ENCODE measurements at regions of chr1 and their contacts with region 1.

Region 1: DNA sequence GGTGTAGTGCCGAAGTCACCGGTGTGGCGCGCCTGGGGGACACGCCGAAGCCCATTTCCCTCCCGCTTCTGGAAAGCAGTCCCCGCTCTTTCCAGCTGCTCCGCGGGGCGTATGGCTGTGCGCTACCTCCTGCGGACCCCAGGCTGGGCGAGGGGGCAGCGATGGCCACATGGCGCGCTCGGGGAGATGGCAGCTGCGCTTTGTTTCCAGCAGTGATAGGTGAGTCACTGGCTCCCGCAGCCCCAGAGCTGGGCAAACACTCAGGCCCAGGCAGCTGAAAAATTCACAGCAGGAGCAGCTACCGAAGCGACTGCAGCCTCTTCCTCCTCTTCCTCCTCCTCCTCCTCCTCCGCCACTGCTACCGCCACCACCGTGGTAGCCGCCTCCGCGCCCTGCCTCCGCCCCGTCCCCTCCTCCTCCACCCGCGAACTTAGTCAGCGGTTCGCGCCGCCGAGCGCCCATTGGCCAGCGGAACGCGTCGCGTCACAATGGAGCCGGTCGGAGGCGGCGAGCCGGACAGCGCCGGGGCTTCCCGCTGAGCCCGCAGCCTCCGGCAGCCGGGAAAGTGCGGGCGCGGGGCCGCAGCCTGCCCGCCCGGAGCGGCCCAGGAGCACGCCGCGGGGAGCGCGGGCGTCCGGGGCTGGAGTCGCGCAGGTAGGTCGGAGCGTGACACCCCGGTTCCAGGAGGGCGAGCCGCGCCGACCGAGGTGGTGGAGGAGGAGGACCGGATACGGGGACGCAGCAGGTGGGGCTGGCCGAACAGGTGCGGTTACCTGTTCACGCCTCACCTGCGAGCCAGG is at the start of gene LRRC8B:
- DNase-seq: peak; percentile 85
- H3K4me3 ChIP-seq: peak within 1 kb of the TSS; percentile 87
- H3K27ac ChIP-seq: peak within 1 kb of the TSS; percentile 65
- H3K4me1 ChIP-seq: peaks cover 44% of the 10 kb centered on the region
- CTCF ChIP-seq: no peak
- total RNA-seq, gene LRRC8B: 3.2 and 4.4 TPM in 2 replicates

Region 2: DNA sequence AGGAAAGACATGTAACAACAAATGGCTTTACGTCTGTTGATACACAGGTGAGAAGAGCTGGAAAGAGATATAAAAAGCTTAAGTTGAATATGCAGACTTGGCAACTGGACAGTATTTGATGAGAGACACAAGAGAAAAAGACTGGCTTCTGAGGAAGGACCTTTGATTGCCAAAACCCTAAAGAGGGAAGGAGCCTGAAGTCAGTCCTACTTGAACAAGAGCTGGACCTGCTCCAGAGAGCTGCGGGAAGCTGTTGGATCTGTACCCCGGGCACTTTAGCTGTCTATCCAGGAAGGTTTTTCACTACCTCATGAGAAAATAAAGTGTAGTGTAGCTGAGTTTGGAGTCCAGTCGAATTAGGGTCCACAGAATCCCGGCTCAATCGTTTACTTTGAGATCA is 25.2 kb before region 1 on chr1:
- CTCF ChIA-PET with region 1: no interaction called
- POLR2A ChIA-PET with region 1: no interaction called
- intact Hi-C with region 1: no loop called
- DNase-seq: no peak
- H3K4me3 ChIP-seq: no peak overlapping the region
- H3K27ac ChIP-seq: no peak overlapping the region
- H3K4me1 ChIP-seq: no peaks in the 10 kb centered on the region
- CTCF ChIP-seq: no peak

Region 3: DNA sequence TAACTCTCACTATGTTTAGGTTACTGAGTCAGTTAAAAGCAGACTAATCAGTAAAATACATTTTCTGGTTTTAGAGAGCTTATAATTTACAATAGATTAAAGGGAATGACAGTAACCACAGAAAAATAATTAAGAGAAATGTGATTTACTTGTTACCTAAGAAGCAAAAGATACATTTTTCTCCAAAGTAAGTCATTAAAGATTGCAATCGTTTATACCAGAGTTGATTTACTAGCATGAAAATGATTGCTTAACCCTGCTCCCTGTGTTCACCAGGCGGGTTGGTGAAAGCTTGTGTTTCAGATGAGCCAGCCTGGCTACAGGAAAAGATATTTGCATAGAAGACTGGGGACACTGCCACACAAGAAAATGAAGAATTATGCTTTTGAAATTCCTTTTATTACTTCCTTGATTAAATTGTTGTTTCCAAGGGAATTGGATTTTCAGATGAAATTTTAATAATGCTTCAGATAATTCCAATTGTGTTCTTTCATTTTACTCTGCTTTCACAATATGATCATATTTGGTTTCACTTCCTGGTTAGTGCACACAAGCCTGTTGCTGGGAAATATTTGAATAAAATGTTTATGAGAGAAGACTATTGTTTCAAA is 28.0 kb after region 1 on chr1:
- CTCF ChIA-PET with region 1: no interaction called
- POLR2A ChIA-PET with region 1: no interaction called
- intact Hi-C with region 1: loop called (anchors 1 kb)
- DNase-seq: peak; percentile 65
- H3K4me3 ChIP-seq: peak overlapping the region; percentile 55
- H3K27ac ChIP-seq: peak overlapping the region; percentile 58
- H3K4me1 ChIP-seq: peaks cover 20% of the 10 kb centered on the region
- CTCF ChIP-seq: no peak

Region 4: GRCh38 chr1:89598450-89599331 is 74.1 kb after region 1 on chr1:
- CTCF ChIA-PET with region 1: no interaction called
- POLR2A ChIA-PET with region 1: no interaction called
- intact Hi-C with region 1: loop called (anchors 1 kb)
- DNase-seq: peak; percentile 50
- H3K4me3 ChIP-seq: no peak overlapping the region
- H3K27ac ChIP-seq: no peak overlapping the region
- H3K4me1 ChIP-seq: no peaks in the 10 kb centered on the region
- CTCF ChIP-seq: peak; percentile 89

Region 5: DNA sequence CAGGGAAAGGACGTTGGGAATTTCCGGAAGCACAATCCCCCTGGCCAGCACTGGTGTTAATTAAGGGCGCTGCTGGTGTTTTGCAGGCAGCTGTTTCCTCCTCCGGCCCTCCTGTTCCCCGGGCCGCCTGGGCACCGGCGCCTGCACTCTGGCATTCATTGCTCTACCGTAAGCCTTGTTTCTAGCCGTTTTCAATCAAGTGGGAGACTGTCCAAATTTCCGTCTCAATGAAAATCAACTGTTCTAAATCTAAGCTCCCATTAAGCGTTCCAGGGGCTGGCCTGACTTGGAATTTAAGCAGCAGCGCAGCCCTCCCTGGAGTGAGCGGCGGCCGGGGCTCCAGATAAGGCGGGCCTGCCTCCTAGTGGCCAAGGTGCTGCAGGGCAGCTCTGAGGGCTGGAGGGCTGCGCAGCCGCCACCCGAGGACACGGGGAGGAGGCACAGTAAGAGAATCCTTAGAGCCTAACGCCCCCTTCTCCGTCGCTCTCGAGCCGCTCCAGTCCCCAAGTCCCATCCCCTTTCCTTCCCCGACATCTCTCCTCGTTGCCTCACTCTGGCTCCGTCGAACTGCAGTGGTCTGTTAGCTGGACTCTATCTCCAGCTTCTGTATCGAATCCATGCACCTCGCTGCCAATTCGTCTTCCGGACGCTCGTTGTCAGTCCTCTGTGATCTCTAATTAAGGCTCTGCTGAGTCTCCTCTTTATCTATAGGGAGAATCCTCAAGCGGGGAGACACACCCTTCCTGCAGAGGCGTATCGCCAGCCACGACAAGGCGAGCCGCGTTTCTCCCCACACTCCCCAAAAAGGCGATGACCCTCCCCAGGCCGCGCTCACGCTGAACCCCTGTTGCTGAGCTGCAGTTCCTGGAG is 238.4 kb after region 1 on chr1:
- CTCF ChIA-PET with region 1: no interaction called
- POLR2A ChIA-PET with region 1: no interaction called
- intact Hi-C with region 1: loop called (anchors 2 kb)
- DNase-seq: peak; percentile 87
- H3K4me3 ChIP-seq: peak overlapping the region; percentile 37
- H3K27ac ChIP-seq: no peak overlapping the region
- H3K4me1 ChIP-seq: peaks cover 16% of the 10 kb centered on the region
- CTCF ChIP-seq: peak; percentile 96

Region 6: DNA sequence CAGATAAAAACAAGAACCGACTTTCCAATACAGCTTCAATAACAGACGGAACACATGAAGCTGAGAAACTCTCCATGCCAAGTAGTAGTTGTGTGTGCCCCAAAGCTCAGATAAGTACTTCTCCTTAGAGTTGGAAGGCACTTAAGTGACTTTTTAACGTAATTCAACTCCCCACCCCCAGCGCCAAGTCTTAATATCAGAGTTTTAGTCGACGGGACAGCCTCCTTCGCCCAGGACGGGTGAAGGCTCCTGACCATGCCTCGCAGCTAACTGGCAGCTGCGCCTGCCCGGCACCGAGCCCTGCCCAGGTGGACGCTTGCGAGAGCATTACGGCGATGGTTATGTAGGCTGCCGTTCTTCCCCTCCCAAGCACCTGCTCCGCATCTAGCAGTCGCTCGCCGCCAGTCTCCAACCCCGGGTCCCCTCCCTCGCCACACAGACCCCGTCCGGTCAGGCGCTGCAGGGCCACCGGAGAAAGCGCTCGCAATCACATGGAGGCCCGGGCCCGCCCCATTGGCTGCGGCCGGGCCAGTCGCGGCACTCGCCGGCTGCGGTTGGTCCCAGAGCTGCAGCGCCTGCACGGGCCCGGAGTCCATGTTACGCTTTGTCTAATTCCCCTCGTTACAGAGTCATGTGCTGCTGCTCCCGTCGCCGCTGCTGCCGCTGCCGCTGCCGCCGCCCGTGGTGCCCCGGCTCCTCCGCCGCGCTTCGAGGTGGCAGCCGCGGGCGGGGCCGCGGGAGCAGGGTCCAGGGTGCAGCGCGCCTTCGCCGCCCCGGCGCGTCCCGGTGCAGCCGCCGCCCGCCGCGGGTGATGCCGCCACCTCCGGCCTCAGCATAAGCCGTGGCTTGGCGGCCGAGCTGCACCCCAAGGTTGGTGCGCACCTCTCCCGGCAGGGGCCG is 296.1 kb after region 1 on chr1 and contains the start of gene LRRC8D:
- CTCF ChIA-PET with region 1: no interaction called
- POLR2A ChIA-PET with region 1: no interaction called
- intact Hi-C with region 1: loop called (anchors 2 kb)
- DNase-seq: peak; percentile 89
- H3K4me3 ChIP-seq: peak within 1 kb of the TSS; percentile 74
- H3K27ac ChIP-seq: peak within 1 kb of the TSS; percentile 89
- H3K4me1 ChIP-seq: peaks cover 37% of the 10 kb centered on the region
- CTCF ChIP-seq: no peak
- total RNA-seq, gene LRRC8D: 19.3 and 23.8 TPM in 2 replicates

Region 7: DNA sequence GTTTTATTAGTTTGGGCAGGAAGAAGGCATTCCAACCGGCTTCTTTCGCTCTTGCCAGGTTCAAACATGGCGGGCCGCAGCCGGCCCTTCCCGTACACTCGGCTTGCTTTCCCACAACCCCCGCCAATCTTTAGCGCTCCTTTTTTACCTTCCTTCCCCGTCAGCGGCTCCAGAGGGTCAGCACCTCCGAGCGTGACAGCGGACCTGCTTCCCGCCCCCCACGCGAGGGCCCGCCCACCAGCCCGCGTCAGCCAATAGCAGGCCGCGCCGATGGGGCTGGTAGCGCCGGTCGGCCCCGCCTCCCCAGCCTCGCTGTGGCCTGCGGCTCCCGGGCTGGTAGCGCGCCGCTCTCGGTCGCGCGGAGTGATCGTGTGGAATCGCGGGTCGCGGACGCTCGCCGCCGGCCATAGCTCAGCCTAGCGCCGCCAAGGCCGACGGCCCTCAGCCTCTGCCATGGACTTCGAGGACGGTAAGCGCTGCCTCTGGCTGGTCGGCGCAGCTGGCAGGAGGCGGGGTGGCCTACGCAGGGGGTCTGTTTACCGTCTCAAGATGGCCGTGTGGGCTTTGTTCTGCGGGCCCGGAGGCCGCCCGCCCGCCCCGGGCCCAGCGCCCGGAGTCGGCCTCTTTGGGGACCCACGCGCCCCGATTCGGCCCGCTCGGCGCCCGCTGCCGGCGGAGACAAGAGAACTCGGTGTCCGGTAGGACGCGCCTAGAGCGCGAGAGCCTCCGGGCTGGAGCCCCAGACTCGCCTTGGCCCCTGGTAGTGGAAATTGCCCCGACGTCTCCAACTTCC is 470.4 kb after region 1 on chr1 and contains the start of gene ZNF326:
- CTCF ChIA-PET with region 1: no interaction called
- POLR2A ChIA-PET with region 1: no interaction called
- intact Hi-C with region 1: loop called (anchors 5 kb)
- DNase-seq: peak; percentile 94
- H3K4me3 ChIP-seq: peak within 1 kb of the TSS; percentile 90
- H3K27ac ChIP-seq: peak within 1 kb of the TSS; percentile 67
- H3K4me1 ChIP-seq: peaks cover 28% of the 10 kb centered on the region
- CTCF ChIP-seq: no peak
- total RNA-seq, gene ZNF326: 10.5 and 11.5 TPM in 2 replicates